Calu3 (cell line): ENCODE measurements at regions of chr10 and their contacts with region 1.

Region 1: DNA sequence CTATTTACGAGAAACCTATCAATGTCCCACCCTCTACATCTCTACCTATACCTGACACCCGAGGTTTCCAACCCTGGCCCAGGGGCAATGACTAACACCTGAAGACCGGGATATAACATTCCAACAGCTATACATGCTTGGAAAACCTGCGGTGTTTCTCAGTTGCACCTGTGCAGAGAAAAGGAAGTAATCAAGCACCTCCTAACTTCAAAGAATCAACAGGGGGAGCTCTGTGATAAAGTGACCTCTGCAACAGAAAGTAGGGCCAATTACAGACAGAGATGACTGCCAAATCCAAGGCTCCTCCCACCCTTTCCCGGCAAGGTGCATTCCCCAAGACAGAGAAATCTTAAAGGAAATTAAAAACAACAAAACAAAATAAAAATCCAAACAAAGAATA is 41.3 kb downstream of the CCDC6 start:
- DNase-seq: peak; percentile 71
- H3K4me3 Mint-ChIP-seq: peak overlapping the region; percentile 33
- H3K27ac Mint-ChIP-seq: peak overlapping the region; percentile 21
- H3K4me1 Mint-ChIP-seq: peaks cover 63% of the 10 kb centered on the region
- H3K27me3 Mint-ChIP-seq: no peaks in the 10 kb centered on the region
- CTCF ChIP-seq: peak; percentile 72

Region 2: DNA sequence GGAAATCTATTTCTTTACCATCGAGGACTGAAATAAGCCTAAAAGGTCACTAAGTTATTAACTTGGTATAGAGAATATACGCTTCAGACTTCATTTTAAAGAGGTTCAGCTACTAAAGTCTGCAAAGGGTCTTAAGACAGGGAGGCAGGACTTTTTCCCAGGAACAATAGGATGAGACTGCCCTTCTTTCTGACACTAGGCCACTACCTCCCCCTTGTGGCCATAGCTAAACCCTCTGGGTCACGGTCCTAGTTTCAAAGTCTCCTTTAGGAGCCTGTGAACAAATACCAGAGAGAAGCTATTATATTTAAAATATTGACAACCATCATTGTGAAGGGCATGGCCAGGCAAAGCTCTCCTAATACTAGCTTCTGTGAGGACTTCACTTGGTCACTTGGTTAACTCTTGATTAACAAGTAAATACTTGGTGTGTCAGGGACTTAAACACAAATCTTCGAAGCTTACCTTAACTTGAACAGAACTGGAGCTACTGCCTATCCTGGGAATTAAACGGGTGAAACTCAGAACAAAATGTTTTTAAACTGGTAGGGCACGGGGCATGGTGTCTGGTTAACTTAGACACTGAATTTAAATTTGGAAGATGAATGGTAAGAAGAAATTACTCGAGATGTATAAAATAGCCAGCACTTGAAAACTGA is 34.4 kb before region 1 on chr10:
- CTCF ChIA-PET with region 1: interaction called, 11 read pairs
- intact Hi-C with region 1: no loop called
- DNase-seq: peak; percentile 66
- H3K4me3 Mint-ChIP-seq: no peak overlapping the region
- H3K27ac Mint-ChIP-seq: no peak overlapping the region
- H3K4me1 Mint-ChIP-seq: peaks cover 15% of the 10 kb centered on the region
- H3K27me3 Mint-ChIP-seq: no peaks in the 10 kb centered on the region
- CTCF ChIP-seq: peak; percentile 85

Region 3: GRCh38 chr10:59991661-59992060 is 126.6 kb after region 1 on chr10:
- CTCF ChIA-PET with region 1: interaction called, 11 read pairs
- intact Hi-C with region 1: no loop called
- DNase-seq: peak; percentile 91
- H3K4me3 Mint-ChIP-seq: peak overlapping the region; percentile 60
- H3K27ac Mint-ChIP-seq: peak overlapping the region; percentile 99
- H3K4me1 Mint-ChIP-seq: peaks cover 65% of the 10 kb centered on the region
- H3K27me3 Mint-ChIP-seq: no peaks in the 10 kb centered on the region
- CTCF ChIP-seq: no peak

Region 4: GRCh38 chr10:60021324-60021723 is 156.2 kb after region 1 on chr10:
- CTCF ChIA-PET with region 1: no interaction called
- intact Hi-C with region 1: no loop called
- DNase-seq: no peak
- H3K4me3 Mint-ChIP-seq: no peak overlapping the region
- H3K27ac Mint-ChIP-seq: no peak overlapping the region
- H3K4me1 Mint-ChIP-seq: no peaks in the 10 kb centered on the region
- H3K27me3 Mint-ChIP-seq: no peaks in the 10 kb centered on the region
- CTCF ChIP-seq: no peak